Gastrocnemius medialis (tissue), 4 donors: ENCODE measurements at regions of chr1 and their contacts with region 1.

Region 1: DNA sequence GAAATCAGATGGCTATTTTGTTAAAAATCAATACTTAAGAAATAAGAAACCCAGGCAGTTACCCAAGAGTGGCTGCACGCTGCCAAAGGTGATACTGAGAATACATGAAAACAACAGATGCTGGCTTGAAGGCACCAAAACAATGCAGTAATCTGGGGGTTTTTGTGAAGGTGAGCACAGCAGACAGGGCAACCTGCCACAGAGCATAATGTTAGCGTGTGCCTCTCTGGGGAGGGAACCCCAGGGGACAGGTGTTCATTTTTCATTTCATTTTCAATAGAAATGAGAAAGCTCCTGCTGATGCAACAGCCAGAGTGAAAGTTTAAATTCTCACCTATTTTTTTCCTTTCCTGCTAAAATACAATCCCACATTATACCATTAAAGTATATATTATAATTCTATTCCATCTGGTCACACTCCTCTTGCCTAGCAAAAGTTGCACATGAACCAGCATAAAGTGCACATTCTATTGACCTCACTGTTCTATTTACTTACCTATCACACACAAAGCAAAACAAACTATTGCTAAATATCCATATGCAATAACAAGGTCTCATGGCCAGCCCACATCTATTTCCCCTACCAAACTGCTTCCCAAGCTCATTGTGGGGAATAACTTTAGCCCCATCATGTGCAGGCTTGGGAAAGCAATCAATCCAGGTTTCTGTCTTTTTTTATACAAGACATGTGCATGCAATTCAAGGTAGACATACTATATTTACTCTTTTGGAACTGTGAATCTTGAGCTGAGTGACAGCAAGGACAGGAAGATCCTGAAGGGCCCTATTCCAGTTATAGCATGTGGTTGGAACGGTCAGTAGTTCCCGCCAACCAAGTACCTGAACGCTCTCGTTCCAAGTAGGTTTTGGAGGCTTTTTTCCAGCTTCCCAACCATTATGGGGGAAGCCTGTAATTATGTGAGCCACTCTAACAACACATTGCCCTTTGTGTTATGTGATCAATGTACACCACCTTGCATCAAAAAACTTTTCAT is 173.6 kb downstream of the RERE start:
- DNase-seq: no peak
- ATAC-seq: peak in 1 of 2 donors; percentile 28
- H3K4me3 ChIP-seq: no peak overlapping the region
- H3K27ac ChIP-seq: peak overlapping the region in 1 of 4 donors; percentile 19
- H3K4me1 ChIP-seq: peaks cover 58 to 71% of the 10 kb centered on the region in 2 donors
- H3K27me3 ChIP-seq: no peaks in the 10 kb centered on the region
- CTCF ChIP-seq: no peak
- POLR2A ChIP-seq: no peak

Region 2: GRCh38 chr1:8329439-8329838 is 314.4 kb before region 1 on chr1:
- in situ Hi-C with region 1: no loop called
- intact Hi-C with region 1: no loop called
- DNase-seq: no peak
- ATAC-seq: no peak
- H3K4me3 ChIP-seq: no peak overlapping the region
- H3K27ac ChIP-seq: no peak overlapping the region
- H3K4me1 ChIP-seq: peaks cover 0 to 3% of the 10 kb centered on the region in 2 donors
- H3K27me3 ChIP-seq: no peaks in the 10 kb centered on the region
- CTCF ChIP-seq: no peak
- POLR2A ChIP-seq: no peak

Region 3: DNA sequence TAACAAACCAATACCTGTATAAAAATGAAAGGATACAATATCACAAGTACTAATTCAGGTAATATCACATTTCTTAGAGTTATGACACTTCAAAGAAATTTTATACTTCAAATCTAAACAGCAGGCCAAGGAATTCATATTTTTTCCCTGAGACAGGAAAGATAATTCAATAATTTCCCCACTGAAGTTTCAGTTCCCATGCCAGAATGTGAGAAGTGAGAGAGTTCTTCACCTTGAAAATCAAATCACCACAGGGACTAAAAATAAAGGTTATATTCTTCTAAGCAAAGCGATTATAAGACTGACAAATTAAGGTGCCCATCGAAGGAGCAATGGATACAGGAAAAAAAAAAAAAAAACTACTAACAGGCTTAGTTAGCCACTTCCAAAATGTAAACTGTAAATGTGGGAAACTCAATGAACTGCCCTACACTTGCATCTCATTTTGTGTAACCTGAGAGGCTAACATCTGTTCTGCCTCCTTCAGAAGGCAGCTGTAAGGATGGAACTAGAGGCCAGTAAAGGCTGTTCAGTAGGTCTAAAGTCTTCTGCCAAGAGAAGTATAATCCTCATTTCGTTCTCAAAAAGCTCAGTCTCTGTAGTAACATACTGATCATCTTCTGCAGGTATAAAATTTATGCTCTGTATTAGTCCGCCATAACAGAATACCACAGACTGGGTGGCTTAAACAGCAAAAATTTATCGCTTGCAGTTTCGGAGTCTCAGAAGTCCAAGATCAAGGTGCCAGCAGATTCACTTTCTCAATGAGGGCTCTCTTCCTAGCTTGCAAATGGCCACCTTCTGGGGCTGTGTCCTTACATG is 45.8 kb after region 1 on chr1:
- in situ Hi-C with region 1: loop called in 1 of 4 experiments (anchors 10 kb)
- intact Hi-C with region 1: no loop called
- DNase-seq: no peak
- ATAC-seq: no peak
- H3K4me3 ChIP-seq: no peak overlapping the region
- H3K27ac ChIP-seq: no peak overlapping the region
- H3K4me1 ChIP-seq: peaks cover 4 to 14% of the 10 kb centered on the region in 2 donors
- H3K27me3 ChIP-seq: no peaks in the 10 kb centered on the region
- CTCF ChIP-seq: no peak
- POLR2A ChIP-seq: no peak